PC-9 (cell line): ENCODE measurements at regions of chr11 and their contacts with region 1.

Region 1: DNA sequence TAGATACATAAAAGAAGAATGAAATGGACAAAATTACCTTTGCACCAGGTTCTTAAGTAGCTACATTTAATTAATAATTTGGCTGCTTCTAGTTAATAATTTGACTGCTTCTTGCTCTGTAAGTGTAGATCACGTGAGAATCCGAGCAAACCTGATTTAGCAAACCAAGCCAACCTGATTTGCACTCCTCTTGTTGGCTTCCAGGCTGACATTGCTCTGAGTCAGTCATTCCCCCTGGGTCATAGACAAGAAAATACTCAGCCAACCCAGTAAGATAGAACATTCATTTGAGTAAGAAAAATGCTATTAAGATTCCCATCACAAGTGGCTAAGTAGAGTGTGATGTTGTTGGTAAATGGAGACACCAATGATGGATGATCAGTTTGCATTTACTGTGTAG is 304.1 kb downstream of the C11orf87 start:
- DNase-seq: no peak
- H3K4me3 ChIP-seq: no peak overlapping the region
- H3K27ac ChIP-seq: no peak overlapping the region
- H3K4me1 ChIP-seq: peaks cover 14% of the 10 kb centered on the region
- H3K27me3 ChIP-seq: no peaks in the 10 kb centered on the region
- CTCF ChIP-seq: no peak

Region 2: GRCh38 chr11:109298865-109299264 is 427.2 kb before region 1 on chr11:
- CTCF ChIA-PET with region 1: interaction called, 12 read pairs
- POLR2A ChIA-PET with region 1: no interaction called
- intact Hi-C with region 1: no loop called
- DNase-seq: no peak
- H3K4me3 ChIP-seq: no peak overlapping the region
- H3K27ac ChIP-seq: no peak overlapping the region
- H3K4me1 ChIP-seq: 0 out of 2 replicates have a peak, but pooled peaks cover 5% of the 10 kb centered on the region
- H3K27me3 ChIP-seq: no peaks in the 10 kb centered on the region
- CTCF ChIP-seq: no peak

Region 3: GRCh38 chr11:109629734-109630133 is 96.3 kb before region 1 on chr11:
- CTCF ChIA-PET with region 1: no interaction called
- POLR2A ChIA-PET with region 1: no interaction called
- intact Hi-C with region 1: no loop called
- DNase-seq: no peak
- H3K4me3 ChIP-seq: no peak overlapping the region
- H3K27ac ChIP-seq: no peak overlapping the region
- H3K4me1 ChIP-seq: no peaks in the 10 kb centered on the region
- H3K27me3 ChIP-seq: no peaks in the 10 kb centered on the region
- CTCF ChIP-seq: no peak

Region 4: GRCh38 chr11:109680127-109680526 is 45.9 kb before region 1 on chr11:
- CTCF ChIA-PET with region 1: no interaction called
- POLR2A ChIA-PET with region 1: no interaction called
- intact Hi-C with region 1: no loop called
- DNase-seq: peak in 1 of 2 experiments; percentile 12
- H3K4me3 ChIP-seq: no peak overlapping the region
- H3K27ac ChIP-seq: no peak overlapping the region
- H3K4me1 ChIP-seq: no peaks in the 10 kb centered on the region
- H3K27me3 ChIP-seq: 0 out of 2 replicates have a peak, but pooled peaks cover 8% of the 10 kb centered on the region
- CTCF ChIP-seq: no peak

Region 5: GRCh38 chr11:109707411-109707810 is 18.6 kb before region 1 on chr11:
- CTCF ChIA-PET with region 1: no interaction called
- POLR2A ChIA-PET with region 1: no interaction called
- intact Hi-C with region 1: no loop called
- DNase-seq: no peak
- H3K4me3 ChIP-seq: no peak overlapping the region
- H3K27ac ChIP-seq: no peak overlapping the region
- H3K4me1 ChIP-seq: no peaks in the 10 kb centered on the region
- H3K27me3 ChIP-seq: no peaks in the 10 kb centered on the region
- CTCF ChIP-seq: no peak